Mucosa of descending colon (tissue), 3 donors: ENCODE measurements at regions of chr12 and their contacts with region 1.

Region 1: DNA sequence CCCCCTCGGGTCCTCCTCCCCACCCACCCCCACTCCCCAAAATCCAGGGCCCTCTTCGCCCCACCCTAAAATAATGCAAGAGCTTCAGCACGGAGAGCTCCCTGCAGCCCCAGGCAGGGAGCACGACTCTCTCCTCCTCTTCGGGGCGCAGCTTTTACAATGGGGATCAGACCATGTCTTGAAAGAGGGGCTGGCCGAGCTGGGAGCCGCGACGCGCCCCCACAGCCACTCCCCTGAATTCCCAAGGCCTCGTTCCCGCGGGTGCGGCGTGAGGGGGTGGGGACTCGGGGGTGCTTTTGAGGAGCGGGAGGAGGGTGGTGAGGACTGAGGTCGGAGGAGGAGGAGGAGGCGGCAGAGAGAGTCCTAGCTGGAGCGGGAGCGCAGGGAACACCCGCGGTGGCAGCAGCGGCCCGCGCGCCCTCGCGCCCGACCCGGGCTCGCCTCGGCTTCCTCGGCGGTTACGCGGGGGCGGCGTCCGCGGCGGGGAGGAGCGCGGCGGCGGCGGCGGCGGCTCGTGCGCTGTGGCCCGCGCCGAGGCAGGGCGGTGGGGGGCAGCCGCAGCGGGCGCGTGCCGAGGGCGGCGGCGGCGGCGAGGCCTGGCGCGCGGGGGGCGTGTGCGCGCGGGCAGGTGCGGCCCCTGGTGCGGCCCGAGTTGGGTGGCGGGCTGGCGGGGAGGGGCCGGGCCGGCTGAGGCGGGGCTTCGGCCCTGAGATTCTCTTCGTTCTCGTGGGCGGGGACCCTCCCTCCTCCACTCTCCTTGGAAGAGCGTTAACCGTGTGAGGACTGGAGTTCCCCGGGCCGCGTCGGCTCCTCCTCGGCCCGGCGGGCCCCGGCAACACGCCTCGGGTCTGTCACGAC is at the start of gene ANKS1B:
- DNase-seq: peak in 2 of 3 donors; percentile 25 to 58
- ATAC-seq: peak; percentile 73
- H3K4me3 ChIP-seq: no peak within 1 kb of the TSS
- H3K4me1 ChIP-seq: peaks cover 4% of the 10 kb centered on the region
- CTCF ChIP-seq: no peak
- total RNA-seq, gene ANKS1B: 1.1 to 22.2 (median 2.3) TPM

Region 2: GRCh38 chr12:99824900-99825542 is 159.5 kb before region 1 on chr12:
- intact Hi-C with region 1: loop called in 1 of 2 experiments (anchors 10 kb)
- DNase-seq: peak in 1 of 3 donors; percentile 1
- ATAC-seq: no peak
- H3K4me3 ChIP-seq: no peak overlapping the region
- H3K4me1 ChIP-seq: no peaks in the 10 kb centered on the region
- CTCF ChIP-seq: no peak